PC-3 (cell line): ENCODE measurements at regions of chr6 and their contacts with region 1.

Region 1: GRCh38 chr6:25173951-25174474 is 105.2 kb upstream of the CARMIL1 start:
- DNase-seq: peak; percentile 96
- ATAC-seq: peak; percentile 84
- H3K4me3 ChIP-seq: no peak overlapping the region
- H3K27ac ChIP-seq: peak overlapping the region; percentile 81
- H3K4me1 ChIP-seq: peaks cover 57% of the 10 kb centered on the region
- H3K27me3 ChIP-seq: no peaks in the 10 kb centered on the region
- CTCF ChIP-seq: no peak

Region 2: GRCh38 chr6:25138237-25139125 is 35.5 kb before region 1 on chr6:
- CTCF ChIA-PET with region 1: no interaction called
- POLR2A ChIA-PET with region 1: interaction called, 3 read pairs
- intact Hi-C with region 1: loop called (anchors 2 kb)
- DNase-seq: peak; percentile 54
- ATAC-seq: peak; percentile 98
- H3K4me3 ChIP-seq: peak overlapping the region; percentile 69
- H3K27ac ChIP-seq: no peak overlapping the region
- H3K4me1 ChIP-seq: no peaks in the 10 kb centered on the region; the same call in 1 of the 2 replicates
- H3K27me3 ChIP-seq: no peaks in the 10 kb centered on the region
- CTCF ChIP-seq: no peak

Region 3: DNA sequence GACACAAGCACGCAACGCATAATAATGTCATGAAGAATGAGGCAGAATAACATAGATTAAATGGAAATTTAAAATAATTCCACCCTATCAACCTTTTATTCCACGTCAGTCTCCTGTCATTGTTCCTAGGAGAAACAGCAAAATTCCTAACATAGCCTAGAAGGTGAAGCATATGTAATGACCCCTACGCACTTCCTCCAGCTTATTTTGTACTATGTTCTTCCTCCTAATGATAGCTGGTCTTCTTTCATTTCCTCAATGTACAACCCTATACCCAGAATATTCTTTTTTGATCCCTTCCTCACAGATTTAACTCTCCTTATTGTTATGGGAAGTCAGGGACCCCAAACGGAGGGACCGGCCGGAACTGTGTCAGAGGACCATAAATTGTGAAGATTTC is 16.8 kb before region 1 on chr6:
- CTCF ChIA-PET with region 1: no interaction called
- POLR2A ChIA-PET with region 1: no interaction called
- intact Hi-C with region 1: no loop called
- DNase-seq: no peak
- ATAC-seq: no peak
- H3K4me3 ChIP-seq: no peak overlapping the region
- H3K27ac ChIP-seq: no peak overlapping the region
- H3K4me1 ChIP-seq: no peaks in the 10 kb centered on the region
- H3K27me3 ChIP-seq: no peaks in the 10 kb centered on the region
- CTCF ChIP-seq: no peak